A549 (cell line): ENCODE measurements at regions of chr6 and their contacts with region 1.

Region 1: GRCh38 chr6:12569646-12570045 is 146.9 kb upstream of the PHACTR1 start:
- DNase-seq: no peak
- ATAC-seq: no peak
- H3K4me3 ChIP-seq: no peak overlapping the region
- H3K27ac ChIP-seq: peak overlapping the region in 1 of 2 experiments; percentile 47; a peak in 2 of 6 replicates
- H3K4me1 ChIP-seq: peaks cover 54% of the 10 kb centered on the region
- CTCF ChIP-seq: no peak
- EP300 ChIP-seq: no peak
- POLR2A ChIP-seq: no peak
- RAD21 ChIP-seq: no peak

Region 2: DNA sequence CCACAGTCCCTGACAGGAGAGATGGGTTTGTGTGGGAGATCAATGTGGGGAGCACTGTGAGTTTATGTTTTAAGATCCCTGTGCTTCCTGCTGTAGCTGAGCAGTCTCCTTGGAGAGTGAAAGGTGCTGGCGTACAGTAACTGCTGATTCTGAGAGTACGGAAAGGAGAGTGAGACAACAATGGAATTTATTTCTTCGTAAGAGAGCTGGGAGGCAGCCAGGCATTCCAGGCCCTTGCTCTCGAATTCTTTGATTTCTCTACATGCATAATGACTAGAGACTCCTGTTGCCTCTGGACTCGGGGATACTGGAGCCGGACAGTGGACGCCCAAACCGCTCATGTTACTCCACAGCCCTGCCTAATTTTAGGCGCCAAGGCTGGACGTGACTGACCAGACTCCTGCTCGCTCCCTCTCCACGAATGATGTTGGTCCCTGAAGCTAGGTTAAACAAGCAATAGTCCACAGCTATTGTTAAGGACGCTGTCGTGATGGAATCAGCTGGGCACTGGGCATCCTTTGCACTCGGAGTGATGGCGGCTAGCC is 15.9 kb after region 1 on chr6:
- CTCF ChIA-PET with region 1: no interaction called
- POLR2A ChIA-PET with region 1: interaction called, 15 read pairs
- DNase-seq: no peak
- ATAC-seq: no peak
- H3K4me3 ChIP-seq: no peak overlapping the region
- H3K27ac ChIP-seq: peak overlapping the region in 1 of 2 experiments; percentile 57; a peak in 2 of 6 replicates
- H3K4me1 ChIP-seq: 0 out of 3 replicates have a peak, but pooled peaks cover 9% of the 10 kb centered on the region
- CTCF ChIP-seq: no peak
- EP300 ChIP-seq: no peak
- POLR2A ChIP-seq: no peak
- RAD21 ChIP-seq: no peak